ENCODE measurements at regions of chr4 and their contacts with region 1.

Region 1: GRCh38 chr4:165131247-165131832 is 18.7 kb upstream of the TMEM192 start:
- DNase-seq: peak; percentile 60 to 81 (median 73)
- H3K4me3 ChIP-seq: no peak overlapping the region
- H3K27ac ChIP-seq: no peak overlapping the region
- H3K4me1 ChIP-seq: peaks cover 9 to 35% (median 23%) of the 10 kb centered on the region in 4 experiments
- H3K27me3 ChIP-seq: no peaks in the 10 kb centered on the region

Region 2: DNA sequence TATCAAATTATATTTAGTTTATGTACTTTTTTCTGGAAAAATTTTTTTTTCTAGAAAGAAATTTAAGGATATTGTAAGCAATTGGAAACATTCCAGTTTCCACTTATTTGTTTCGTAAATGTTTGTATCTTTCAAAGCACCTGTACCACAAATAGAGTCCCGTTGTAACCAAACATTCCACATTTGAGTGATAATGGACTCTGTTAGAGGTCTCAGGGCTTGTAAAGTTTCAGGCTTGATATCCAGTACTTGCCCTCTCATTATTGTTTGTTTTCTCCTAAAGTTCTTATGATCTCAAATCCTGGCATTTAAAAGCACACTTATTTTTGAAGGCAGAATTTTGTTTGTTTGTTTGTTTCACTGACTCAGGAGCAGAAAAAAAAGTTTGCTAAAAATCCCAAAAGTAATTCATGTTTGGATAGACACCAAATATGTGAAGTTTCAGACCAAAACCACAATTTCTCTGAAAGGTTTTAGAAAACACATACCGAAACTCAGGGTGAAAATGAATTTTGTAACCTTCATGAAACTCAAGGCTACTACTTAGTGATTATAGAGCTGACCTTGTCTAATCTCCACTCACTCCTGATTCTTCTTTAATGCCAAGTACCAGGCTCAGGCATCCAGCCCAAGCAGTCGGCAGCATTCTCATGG is 13.0 kb before region 1 on chr4:
- CTCF ChIA-PET with region 1: interaction called, 17 read pairs
- POLR2A ChIA-PET with region 1: no interaction called
- DNase-seq: no peak
- H3K4me3 ChIP-seq: no peak overlapping the region
- H3K27ac ChIP-seq: no peak overlapping the region
- H3K4me1 ChIP-seq: peaks cover 0 to 3% (median 1%) of the 10 kb centered on the region in 4 experiments
- H3K27me3 ChIP-seq: peaks cover 0 to 2% (median 0%) of the 10 kb centered on the region in 5 experiments

Region 3: GRCh38 chr4:165327211-165328100 is 196.1 kb after region 1 on chr4 and contains the start of gene MSMO1:
- CTCF ChIA-PET with region 1: interaction called, 15 read pairs
- POLR2A ChIA-PET with region 1: no interaction called
- DNase-seq: peak; percentile 98 to 99 (median 99)
- H3K4me3 ChIP-seq: peak within 1 kb of the TSS; percentile 82 to 98 (median 96)
- H3K27ac ChIP-seq: peak within 1 kb of the TSS; percentile 79 to 94
- H3K4me1 ChIP-seq: peaks cover 16 to 45% (median 23%) of the 10 kb centered on the region in 4 experiments
- H3K27me3 ChIP-seq: no peaks in the 10 kb centered on the region

Region 4: GRCh38 chr4:165343353-165344191 is 212.2 kb after region 1 on chr4:
- CTCF ChIA-PET with region 1: interaction called, 76 read pairs
- POLR2A ChIA-PET with region 1: no interaction called
- DNase-seq: peak; percentile 25 to 53 (median 46)
- H3K4me3 ChIP-seq: no peak overlapping the region
- H3K27ac ChIP-seq: no peak overlapping the region
- H3K4me1 ChIP-seq: no peaks in the 10 kb centered on the region
- H3K27me3 ChIP-seq: no peaks in the 10 kb centered on the region

Region 5: GRCh38 chr4:165464813-165465381 is 333.6 kb after region 1 on chr4:
- CTCF ChIA-PET with region 1: interaction called, 32 read pairs
- POLR2A ChIA-PET with region 1: no interaction called
- DNase-seq: peak; percentile 53 to 77 (median 72)
- H3K4me3 ChIP-seq: no peak overlapping the region
- H3K27ac ChIP-seq: no peak overlapping the region
- H3K4me1 ChIP-seq: no peaks in the 10 kb centered on the region
- H3K27me3 ChIP-seq: no peaks in the 10 kb centered on the region